Activated T-helper 1 cell treated with anti-CD3 and anti-CD28 coated beads, Interleukin-12 subunit alpha, Interleukin-12 subunit beta, Interleukin-2, Interleukin-4 antibody, amounts not matched to agents 30 ng/mL and 10 ng/mL and 1 ng/mL, durations not matched to agents 14 hours and 24 hours and 36 hours (primary cell): ENCODE measurements at regions of chrX and their contacts with region 1.

Region 1: DNA sequence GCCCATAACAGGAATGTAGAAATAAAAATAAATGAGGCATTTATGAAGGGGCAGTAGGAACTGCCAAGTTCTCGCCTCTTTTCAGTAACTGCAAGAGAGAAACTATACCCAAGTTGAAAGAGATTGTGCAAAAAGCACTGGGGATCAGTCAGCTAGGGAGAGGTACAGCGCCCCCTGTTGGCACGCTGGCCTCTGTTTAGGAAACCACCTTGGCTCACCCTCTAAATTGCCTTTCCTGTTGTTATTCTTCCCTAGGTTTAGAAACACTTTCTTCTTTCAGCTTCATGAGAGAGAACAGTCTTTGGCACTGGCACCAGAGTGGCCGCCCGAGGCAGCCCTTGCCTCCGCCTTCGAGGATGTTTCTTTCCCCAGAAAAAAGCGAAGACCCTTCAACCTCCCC is 348.5 kb downstream of the MID1IP1 start:
- DNase-seq: peak; percentile 20
- H3K4me3 Mint-ChIP-seq: no peak overlapping the region
- H3K27ac Mint-ChIP-seq: no peak overlapping the region
- H3K4me1 Mint-ChIP-seq: peaks cover 11% of the 10 kb centered on the region
- H3K27me3 Mint-ChIP-seq: no peaks in the 10 kb centered on the region

Region 2: GRCh38 chrX:38664285-38664684 is 485.5 kb before region 1 on chrX:
- intact Hi-C with region 1: loop called (anchors 1 kb)
- DNase-seq: no peak
- H3K4me3 Mint-ChIP-seq: no peak overlapping the region
- H3K27ac Mint-ChIP-seq: no peak overlapping the region
- H3K4me1 Mint-ChIP-seq: no peaks in the 10 kb centered on the region
- H3K27me3 Mint-ChIP-seq: peaks cover 2% of the 10 kb centered on the region

Region 3: GRCh38 chrX:38754102-38754790 is 395.5 kb before region 1 on chrX:
- intact Hi-C with region 1: loop called (anchors 1 kb)
- DNase-seq: no peak
- H3K4me3 Mint-ChIP-seq: no peak overlapping the region
- H3K27ac Mint-ChIP-seq: no peak overlapping the region
- H3K4me1 Mint-ChIP-seq: no peaks in the 10 kb centered on the region
- H3K27me3 Mint-ChIP-seq: peaks cover 3% of the 10 kb centered on the region

Region 4: DNA sequence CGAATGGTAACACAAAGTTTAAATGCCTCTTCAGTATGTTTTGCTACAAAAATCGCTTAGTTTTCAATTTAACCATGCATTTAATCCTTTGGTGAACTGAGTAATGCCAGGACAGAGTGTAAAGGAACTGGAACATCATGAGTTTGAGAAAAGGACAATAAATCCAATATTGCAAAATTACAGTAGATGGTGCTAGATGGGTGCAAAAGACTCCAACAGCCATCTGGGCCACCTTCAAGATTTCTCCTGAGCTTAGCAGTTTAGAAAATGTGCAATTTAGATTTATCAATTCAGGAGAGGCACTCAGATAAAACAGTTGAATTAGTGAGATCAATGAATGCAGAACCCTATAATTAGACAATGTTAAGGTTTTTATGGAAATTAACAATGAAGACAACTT is 381.7 kb before region 1 on chrX:
- intact Hi-C with region 1: loop called (anchors 5 kb)
- DNase-seq: no peak
- H3K4me3 Mint-ChIP-seq: no peak overlapping the region
- H3K27ac Mint-ChIP-seq: no peak overlapping the region
- H3K4me1 Mint-ChIP-seq: no peaks in the 10 kb centered on the region
- H3K27me3 Mint-ChIP-seq: no peaks in the 10 kb centered on the region

Region 5: GRCh38 chrX:39196192-39197102 is 46.7 kb after region 1 on chrX:
- intact Hi-C with region 1: no loop called
- DNase-seq: peak; percentile 44
- H3K4me3 Mint-ChIP-seq: peak overlapping the region; percentile 58
- H3K27ac Mint-ChIP-seq: peak overlapping the region; percentile 87
- H3K4me1 Mint-ChIP-seq: peaks cover 52% of the 10 kb centered on the region
- H3K27me3 Mint-ChIP-seq: no peaks in the 10 kb centered on the region